ENCODE measurements at regions of chr7 and their contacts with region 1.

Region 1: GRCh38 chr7:992709-993607 is 10.0 kb downstream of the CYP2W1 start:
- DNase-seq: peak; percentile 96
- ATAC-seq: peak; percentile 97
- H3K4me3 ChIP-seq: no peak overlapping the region
- H3K27ac ChIP-seq: no peak overlapping the region
- H3K4me1 ChIP-seq: peaks cover 18% of the 10 kb centered on the region
- H3K27me3 ChIP-seq: peaks cover 12% of the 10 kb centered on the region
- CTCF ChIP-seq: peak; percentile 100

Region 2: GRCh38 chr7:1059200-1060091 is 66.5 kb after region 1 on chr7:
- intact Hi-C with region 1: loop called (anchors 5 kb)
- DNase-seq: peak; percentile 83
- ATAC-seq: peak; percentile 73 to 79
- H3K4me3 ChIP-seq: peak overlapping the region; percentile 23
- H3K27ac ChIP-seq: peak overlapping the region; percentile 77
- H3K4me1 ChIP-seq: peaks cover 37% of the 10 kb centered on the region
- H3K27me3 ChIP-seq: no peaks in the 10 kb centered on the region
- CTCF ChIP-seq: no peak

Region 3: DNA sequence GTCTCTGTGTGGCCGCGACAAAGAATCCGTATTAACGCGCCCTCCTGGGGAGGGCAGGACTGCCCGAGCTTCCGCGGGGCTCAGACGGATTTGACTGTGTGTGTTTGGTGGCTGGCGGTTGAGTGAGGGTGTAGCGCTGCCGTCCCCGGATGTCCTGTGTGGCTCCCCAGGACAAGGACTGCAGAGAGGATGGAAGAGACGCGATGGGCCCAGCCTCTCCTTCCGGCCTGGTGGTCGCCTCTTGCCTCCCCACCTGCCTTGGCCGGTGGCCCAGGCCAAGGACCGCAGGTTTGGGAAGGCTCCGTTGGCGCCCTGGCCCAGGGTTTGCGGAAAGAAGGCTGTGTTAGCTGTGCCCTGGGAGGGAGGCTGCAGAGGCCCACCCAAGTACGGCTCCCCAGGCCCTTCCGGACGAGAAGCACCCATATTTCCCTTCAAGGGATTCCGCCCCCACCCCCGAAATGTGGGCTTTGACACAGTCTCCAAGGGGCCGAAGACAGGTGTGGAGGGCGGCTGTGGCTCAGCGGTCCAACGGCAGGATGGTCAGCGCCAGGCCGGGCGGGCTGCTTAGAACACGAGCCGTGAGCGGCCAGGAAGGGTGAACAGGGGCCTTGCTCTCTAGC is 242.0 kb after region 1 on chr7:
- intact Hi-C with region 1: no loop called
- DNase-seq: no peak
- ATAC-seq: peak in 1 of 2 donors; percentile 9
- H3K4me3 ChIP-seq: no peak overlapping the region
- H3K27ac ChIP-seq: no peak overlapping the region
- H3K4me1 ChIP-seq: peaks cover 10% of the 10 kb centered on the region
- H3K27me3 ChIP-seq: peaks cover 89% of the 10 kb centered on the region
- CTCF ChIP-seq: no peak

Region 4: DNA sequence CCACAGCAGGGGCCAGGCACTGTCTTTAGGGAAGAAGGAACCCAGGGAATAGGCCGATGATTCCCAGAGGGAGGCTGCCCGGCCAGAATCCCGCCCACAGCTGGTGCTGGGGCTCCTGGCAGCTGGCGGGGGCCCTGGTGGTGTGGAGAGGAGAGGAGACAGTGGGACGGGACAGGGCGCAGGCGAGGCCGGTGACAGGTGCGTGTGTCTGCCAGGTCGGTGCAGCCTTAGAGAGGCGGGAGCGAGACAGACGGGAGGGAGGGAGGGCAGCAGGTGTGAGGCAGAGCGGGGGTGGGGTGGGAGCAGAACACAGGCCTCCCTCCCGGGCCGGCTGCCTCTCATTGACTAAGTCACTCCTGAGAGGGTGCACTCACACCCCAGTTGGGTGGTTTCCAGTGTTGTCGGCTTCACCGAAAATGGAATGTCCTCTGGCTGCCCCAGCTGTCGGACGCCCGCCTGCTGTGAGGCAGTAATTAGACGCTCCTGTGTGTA is 732.3 kb after region 1 on chr7:
- intact Hi-C with region 1: no loop called
- DNase-seq: no peak
- ATAC-seq: peak; percentile 51 to 57
- H3K4me3 ChIP-seq: no peak overlapping the region
- H3K27ac ChIP-seq: no peak overlapping the region
- H3K4me1 ChIP-seq: no peaks in the 10 kb centered on the region
- H3K27me3 ChIP-seq: peaks cover 15% of the 10 kb centered on the region
- CTCF ChIP-seq: no peak

Measured in lower lobe of right lung (tissue), 2 donors.